Activated naive CD4-positive, alpha-beta T cell treated with anti-CD3 and anti-CD28 coated beads for 36 hours (primary cell): ENCODE measurements at regions of chr18 and their contacts with region 1.

Region 1: GRCh38 chr18:58761241-58761969 is 90.1 kb downstream of the MALT1 start:
- DNase-seq: no peak
- H3K4me3 Mint-ChIP-seq: no peak overlapping the region
- H3K27ac Mint-ChIP-seq: no peak overlapping the region
- H3K4me1 Mint-ChIP-seq: peaks cover 22% of the 10 kb centered on the region
- H3K27me3 Mint-ChIP-seq: peaks cover 18% of the 10 kb centered on the region

Region 2: GRCh38 chr18:58501066-58501896 is 260.1 kb before region 1 on chr18:
- CTCF ChIA-PET with region 1: interaction called, 35 read pairs
- intact Hi-C with region 1: no loop called
- DNase-seq: no peak
- H3K4me3 Mint-ChIP-seq: no peak overlapping the region
- H3K27ac Mint-ChIP-seq: no peak overlapping the region
- H3K4me1 Mint-ChIP-seq: peaks cover 16% of the 10 kb centered on the region
- H3K27me3 Mint-ChIP-seq: peaks cover 8% of the 10 kb centered on the region

Region 3: GRCh38 chr18:58515175-58515775 is 246.1 kb before region 1 on chr18:
- CTCF ChIA-PET with region 1: interaction called, 22 read pairs
- intact Hi-C with region 1: no loop called
- DNase-seq: no peak
- H3K4me3 Mint-ChIP-seq: no peak overlapping the region
- H3K27ac Mint-ChIP-seq: no peak overlapping the region
- H3K4me1 Mint-ChIP-seq: no peaks in the 10 kb centered on the region
- H3K27me3 Mint-ChIP-seq: no peaks in the 10 kb centered on the region